PC-9 (cell line): ENCODE measurements at regions of chr1 and their contacts with region 1.

Region 1: GRCh38 chr1:202462342-202463076 is 114.0 kb downstream of the PPP1R12B start:
- DNase-seq: peak in 1 of 2 experiments; percentile 65
- H3K4me3 ChIP-seq: no peak overlapping the region
- H3K27ac ChIP-seq: peak overlapping the region; percentile 64
- H3K4me1 ChIP-seq: peaks cover 90% of the 10 kb centered on the region
- H3K27me3 ChIP-seq: no peaks in the 10 kb centered on the region
- CTCF ChIP-seq: no peak

Region 2: GRCh38 chr1:201828820-201829774 is 633.4 kb before region 1 on chr1 and contains the start of gene IPO9:
- CTCF ChIA-PET with region 1: no interaction called
- POLR2A ChIA-PET with region 1: no interaction called
- intact Hi-C with region 1: no loop called
- DNase-seq: peak; percentile 79 to 93
- H3K4me3 ChIP-seq: peak within 1 kb of the TSS; percentile 95
- H3K27ac ChIP-seq: peak within 1 kb of the TSS; percentile 70
- H3K4me1 ChIP-seq: peaks cover 24% of the 10 kb centered on the region
- H3K27me3 ChIP-seq: no peaks in the 10 kb centered on the region
- CTCF ChIP-seq: peak; percentile 90
- total RNA-seq, gene IPO9: 67.3 and 76.2 TPM in 2 replicates

Region 3: DNA sequence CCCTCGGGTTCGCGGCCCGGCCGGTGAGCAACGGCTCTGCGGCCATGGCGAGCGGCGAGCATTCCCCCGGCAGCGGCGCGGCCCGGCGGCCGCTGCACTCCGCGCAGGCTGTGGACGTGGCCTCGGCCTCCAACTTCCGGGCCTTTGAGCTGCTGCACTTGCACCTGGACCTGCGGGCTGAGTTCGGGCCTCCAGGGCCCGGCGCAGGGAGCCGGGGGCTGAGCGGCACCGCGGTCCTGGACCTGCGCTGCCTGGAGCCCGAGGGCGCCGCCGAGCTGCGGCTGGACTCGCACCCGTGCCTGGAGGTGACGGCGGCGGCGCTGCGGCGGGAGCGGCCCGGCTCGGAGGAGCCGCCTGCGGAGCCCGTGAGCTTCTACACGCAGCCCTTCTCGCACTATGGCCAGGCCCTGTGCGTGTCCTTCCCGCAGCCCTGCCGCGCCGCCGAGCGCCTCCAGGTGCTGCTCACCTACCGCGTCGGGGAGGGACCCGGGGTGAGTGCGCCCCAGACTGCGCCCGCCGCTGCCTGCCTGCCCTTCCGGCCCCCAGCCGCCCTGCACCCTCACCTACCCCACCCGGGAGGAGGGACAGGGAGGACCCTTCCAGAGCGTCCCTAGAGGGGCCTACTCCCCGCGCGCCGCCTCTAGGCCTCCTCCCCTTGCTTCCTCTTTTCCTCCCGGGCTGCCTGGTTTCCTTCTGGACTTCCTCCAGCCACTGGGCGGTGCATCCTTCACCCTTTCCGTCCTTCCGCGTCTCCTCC is 479.7 kb before region 1 on chr1 and contains the start of gene RNPEP:
- CTCF ChIA-PET with region 1: no interaction called
- POLR2A ChIA-PET with region 1: no interaction called
- intact Hi-C with region 1: no loop called
- DNase-seq: peak; percentile 73 to 76
- H3K4me3 ChIP-seq: peak within 1 kb of the TSS; percentile 72
- H3K27ac ChIP-seq: peak within 1 kb of the TSS; percentile 16
- H3K4me1 ChIP-seq: peaks cover 14% of the 10 kb centered on the region
- H3K27me3 ChIP-seq: no peaks in the 10 kb centered on the region
- CTCF ChIP-seq: no peak; the same call in 1 of the 2 replicates
- total RNA-seq, gene RNPEP: 108 and 123 TPM in 2 replicates

Region 4: GRCh38 chr1:202184750-202185460 is 277.6 kb before region 1 on chr1:
- CTCF ChIA-PET with region 1: no interaction called
- POLR2A ChIA-PET with region 1: no interaction called
- intact Hi-C with region 1: loop called (anchors 10 kb)
- DNase-seq: peak; percentile 81 to 84
- H3K4me3 ChIP-seq: no peak overlapping the region
- H3K27ac ChIP-seq: no peak overlapping the region
- H3K4me1 ChIP-seq: no peaks in the 10 kb centered on the region
- H3K27me3 ChIP-seq: peaks cover 5% of the 10 kb centered on the region; the same call in 1 of the 2 replicates
- CTCF ChIP-seq: peak; percentile 85

Region 5: DNA sequence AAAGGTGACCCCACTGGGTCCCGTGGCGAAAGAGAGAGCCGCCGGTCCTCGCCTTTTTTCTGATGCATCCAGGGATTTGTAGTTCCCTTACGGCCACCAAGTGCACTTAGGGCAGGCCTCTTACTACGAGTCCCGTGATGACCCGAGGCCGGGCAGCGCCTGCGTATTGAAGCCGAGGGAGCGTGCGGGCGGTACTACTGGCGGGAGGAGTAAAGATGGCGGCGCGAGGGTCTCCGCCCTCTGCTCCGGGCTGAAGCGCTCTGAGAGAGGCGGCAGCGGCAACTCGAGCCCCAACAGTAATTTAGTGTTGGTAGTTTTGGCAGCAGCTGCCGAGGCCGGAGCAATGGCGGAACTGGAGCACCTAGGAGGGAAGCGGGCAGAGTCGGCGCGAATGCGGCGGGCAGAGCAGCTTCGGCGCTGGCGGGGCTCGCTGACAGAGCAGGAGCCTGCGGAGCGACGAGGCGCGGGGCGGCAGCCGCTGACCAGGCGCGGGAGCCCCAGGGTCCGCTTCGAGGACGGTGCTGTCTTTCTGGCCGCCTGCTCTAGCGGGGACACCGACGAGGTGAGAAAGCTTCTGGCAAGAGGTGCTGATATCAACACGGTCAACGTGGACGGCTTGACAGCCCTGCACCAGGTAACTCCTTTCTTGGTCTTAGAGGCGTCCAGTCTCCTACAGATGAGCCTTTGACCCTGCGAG is 113.9 kb before region 1 on chr1 and contains the start of gene PPP1R12B:
- CTCF ChIA-PET with region 1: no interaction called
- POLR2A ChIA-PET with region 1: no interaction called
- intact Hi-C with region 1: loop called (anchors 2 kb)
- DNase-seq: peak; percentile 96 to 99
- H3K4me3 ChIP-seq: peak within 1 kb of the TSS; percentile 86
- H3K27ac ChIP-seq: peak within 1 kb of the TSS; percentile 56
- H3K4me1 ChIP-seq: peaks cover 45% of the 10 kb centered on the region
- H3K27me3 ChIP-seq: no peaks in the 10 kb centered on the region
- CTCF ChIP-seq: no peak
- total RNA-seq, gene PPP1R12B: 33.3 and 35.8 TPM in 2 replicates

Region 6: DNA sequence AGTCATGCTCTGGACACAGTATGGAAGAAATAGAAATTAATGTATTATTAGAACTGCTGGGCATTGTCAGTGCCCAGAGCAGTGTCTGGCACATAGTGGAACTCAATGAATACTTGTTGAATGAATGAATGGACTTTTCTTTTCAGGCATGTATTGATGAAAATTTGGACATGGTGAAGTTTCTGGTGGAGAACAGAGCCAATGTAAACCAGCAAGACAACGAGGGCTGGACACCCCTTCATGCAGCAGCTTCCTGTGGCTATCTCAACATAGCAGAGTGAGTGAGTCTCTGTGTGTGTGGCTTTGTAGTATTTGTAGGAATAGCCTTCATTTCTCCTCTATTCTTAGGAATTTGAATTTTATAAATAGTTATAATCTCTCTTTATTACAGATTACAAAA is 45.9 kb before region 1 on chr1:
- CTCF ChIA-PET with region 1: no interaction called
- POLR2A ChIA-PET with region 1: no interaction called
- intact Hi-C with region 1: loop called (anchors 5 kb)
- DNase-seq: no peak
- H3K4me3 ChIP-seq: no peak overlapping the region
- H3K27ac ChIP-seq: no peak overlapping the region
- H3K4me1 ChIP-seq: peaks cover 30% of the 10 kb centered on the region
- H3K27me3 ChIP-seq: no peaks in the 10 kb centered on the region
- CTCF ChIP-seq: no peak

Region 7: DNA sequence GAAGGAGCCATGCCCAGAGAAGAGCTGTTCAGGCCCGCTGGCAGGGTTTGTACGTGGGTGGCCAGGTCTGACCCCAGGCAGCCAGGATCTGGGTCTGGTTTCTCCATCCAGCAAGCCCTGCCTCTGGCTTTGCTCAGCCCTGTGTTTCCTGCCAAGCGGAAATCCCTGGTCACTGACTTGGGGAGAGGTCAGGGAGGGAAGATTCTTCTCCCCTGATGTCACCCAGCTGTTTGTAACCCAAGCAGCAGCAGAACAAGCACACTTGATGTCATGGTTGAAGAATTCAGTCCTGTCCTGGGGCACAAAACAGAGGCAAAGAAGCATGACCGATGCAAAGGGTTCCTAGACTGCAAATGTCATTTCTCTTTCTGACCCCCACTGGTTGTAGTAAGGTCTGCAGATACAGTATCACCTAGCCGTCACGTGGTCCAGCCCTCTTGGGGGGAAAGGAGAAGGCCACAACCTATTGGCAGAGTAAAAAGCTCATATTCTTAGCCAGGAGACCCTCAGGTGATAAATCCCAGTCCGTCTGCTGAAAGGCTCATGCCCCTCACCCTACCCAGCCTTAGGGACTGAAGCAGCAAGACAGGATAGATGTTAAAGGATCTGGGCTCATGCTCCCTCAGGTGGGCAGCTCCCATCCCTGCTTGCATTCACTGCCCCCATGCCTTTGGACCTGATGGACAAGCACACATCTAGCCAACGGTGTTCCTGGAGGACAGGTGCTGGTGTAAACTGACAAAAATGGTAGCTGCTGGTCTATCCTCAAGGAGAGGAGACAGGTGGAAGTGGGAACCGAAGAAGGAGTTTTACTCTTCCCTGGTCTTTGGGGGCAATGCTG is 126.9 kb after region 1 on chr1:
- CTCF ChIA-PET with region 1: no interaction called
- POLR2A ChIA-PET with region 1: no interaction called
- intact Hi-C with region 1: loop called (anchors 5 kb)
- DNase-seq: peak; percentile 93 to 98
- H3K4me3 ChIP-seq: no peak overlapping the region
- H3K27ac ChIP-seq: peak overlapping the region; percentile 93
- H3K4me1 ChIP-seq: peaks cover 60% of the 10 kb centered on the region
- H3K27me3 ChIP-seq: no peaks in the 10 kb centered on the region
- CTCF ChIP-seq: no peak; the same call in 1 of the 2 replicates

Region 8: GRCh38 chr1:202599677-202600431 is 137.3 kb after region 1 on chr1:
- CTCF ChIA-PET with region 1: interaction called, 6 read pairs
- POLR2A ChIA-PET with region 1: no interaction called
- intact Hi-C with region 1: loop called (anchors 1 kb)
- DNase-seq: peak; percentile 56 to 76
- H3K4me3 ChIP-seq: no peak overlapping the region
- H3K27ac ChIP-seq: no peak overlapping the region
- H3K4me1 ChIP-seq: no peaks in the 10 kb centered on the region
- H3K27me3 ChIP-seq: no peaks in the 10 kb centered on the region
- CTCF ChIP-seq: peak; percentile 83

Region 9: DNA sequence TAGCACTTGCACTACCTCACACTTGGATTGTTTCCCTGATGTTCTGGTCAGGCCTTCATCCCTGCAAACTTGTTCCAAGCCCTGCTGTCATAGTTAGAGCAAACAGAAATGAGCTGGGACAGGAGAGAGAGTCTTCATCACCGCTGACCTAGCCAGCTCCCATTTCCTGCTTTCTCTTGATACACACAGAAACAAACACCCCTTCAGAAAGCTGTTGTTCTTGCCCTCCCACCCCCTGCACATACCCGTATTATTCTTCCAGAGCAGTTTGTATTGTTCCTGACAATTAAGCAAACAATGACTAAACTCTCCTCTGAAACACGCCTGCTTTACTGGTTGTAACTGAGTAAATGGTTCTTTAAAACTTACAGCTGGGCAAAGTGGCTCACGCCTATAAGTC is 250.6 kb after region 1 on chr1:
- CTCF ChIA-PET with region 1: no interaction called
- POLR2A ChIA-PET with region 1: no interaction called
- intact Hi-C with region 1: loop called (anchors 2 kb)
- DNase-seq: peak; percentile 40 to 75
- H3K4me3 ChIP-seq: no peak overlapping the region
- H3K27ac ChIP-seq: no peak overlapping the region
- H3K4me1 ChIP-seq: peaks cover 6% of the 10 kb centered on the region; the same call in 1 of the 2 replicates
- H3K27me3 ChIP-seq: peaks cover 46% of the 10 kb centered on the region
- CTCF ChIP-seq: no peak

Region 10: GRCh38 chr1:202750758-202751157 is 288.2 kb after region 1 on chr1:
- CTCF ChIA-PET with region 1: no interaction called
- POLR2A ChIA-PET with region 1: no interaction called
- intact Hi-C with region 1: no loop called
- DNase-seq: no peak
- H3K4me3 ChIP-seq: no peak overlapping the region
- H3K27ac ChIP-seq: no peak overlapping the region
- H3K4me1 ChIP-seq: no peaks in the 10 kb centered on the region
- H3K27me3 ChIP-seq: no peaks in the 10 kb centered on the region
- CTCF ChIP-seq: 0 out of 2 replicates have a peak, but pooled peaks have one; percentile 26